ENCODE measurements at regions of chr2 and their contacts with region 1.

Region 1: DNA sequence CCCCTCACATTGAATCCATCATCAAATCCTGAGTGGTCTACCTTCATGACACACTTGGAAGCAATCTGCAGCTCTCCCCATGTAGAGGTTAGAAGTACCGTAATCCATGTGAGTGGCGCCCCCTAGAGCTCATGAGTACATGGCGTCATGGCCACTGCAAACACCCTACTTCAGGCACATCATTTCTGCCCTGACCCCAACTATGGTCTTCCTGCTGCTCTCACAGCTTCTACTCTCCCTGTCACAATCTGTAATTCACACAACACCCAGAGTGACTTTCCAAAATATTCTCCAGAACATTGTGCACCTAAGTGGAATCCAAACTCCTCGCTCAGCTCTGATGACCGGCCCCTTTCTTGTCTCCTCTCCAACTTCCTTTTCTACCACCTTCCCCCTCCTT is 141.9 kb downstream of the ANKRD44 start:
- DNase-seq: peak; percentile 61
- CTCF ChIP-seq: peak; percentile 70

Region 2: DNA sequence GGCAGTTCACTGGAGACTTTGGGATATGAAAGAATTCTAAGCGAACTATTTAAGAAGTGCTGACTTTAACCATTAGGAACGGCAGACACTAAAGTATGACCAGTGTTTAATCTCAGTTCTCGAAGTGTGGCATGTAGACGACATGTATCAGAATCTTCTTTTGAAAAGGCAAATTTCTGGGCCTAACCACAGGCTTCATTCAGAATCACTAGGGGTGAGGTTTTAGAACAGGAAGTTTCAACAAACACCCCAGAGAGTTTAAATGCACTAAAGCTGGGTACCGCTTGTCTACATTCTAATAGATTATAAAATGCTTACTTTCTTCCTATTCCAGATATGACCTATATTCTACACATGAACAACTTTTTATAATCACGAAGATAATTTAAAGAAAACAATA is 38.4 kb before region 1 on chr2:
- CTCF ChIA-PET with region 1: interaction called, 12 read pairs
- POLR2A ChIA-PET with region 1: no interaction called
- DNase-seq: peak; percentile 64
- CTCF ChIP-seq: no peak

Region 3: GRCh38 chr2:197145471-197146138 is 23.1 kb before region 1 on chr2:
- CTCF ChIA-PET with region 1: interaction called, 23 read pairs
- POLR2A ChIA-PET with region 1: no interaction called
- DNase-seq: peak; percentile 68
- CTCF ChIP-seq: no peak

Region 4: GRCh38 chr2:197179744-197180498 is 11.2 kb after region 1 on chr2:
- CTCF ChIA-PET with region 1: interaction called, 54 read pairs
- POLR2A ChIA-PET with region 1: no interaction called
- DNase-seq: no peak
- CTCF ChIP-seq: no peak

Region 5: GRCh38 chr2:197191177-197191939 is 22.7 kb after region 1 on chr2:
- CTCF ChIA-PET with region 1: interaction called, 20 read pairs
- POLR2A ChIA-PET with region 1: no interaction called
- DNase-seq: peak; percentile 43
- CTCF ChIP-seq: peak; percentile 49

Measured in GM10248 (cell line).